ENCODE measurements at regions of chrX and their contacts with region 1.

Region 1: DNA sequence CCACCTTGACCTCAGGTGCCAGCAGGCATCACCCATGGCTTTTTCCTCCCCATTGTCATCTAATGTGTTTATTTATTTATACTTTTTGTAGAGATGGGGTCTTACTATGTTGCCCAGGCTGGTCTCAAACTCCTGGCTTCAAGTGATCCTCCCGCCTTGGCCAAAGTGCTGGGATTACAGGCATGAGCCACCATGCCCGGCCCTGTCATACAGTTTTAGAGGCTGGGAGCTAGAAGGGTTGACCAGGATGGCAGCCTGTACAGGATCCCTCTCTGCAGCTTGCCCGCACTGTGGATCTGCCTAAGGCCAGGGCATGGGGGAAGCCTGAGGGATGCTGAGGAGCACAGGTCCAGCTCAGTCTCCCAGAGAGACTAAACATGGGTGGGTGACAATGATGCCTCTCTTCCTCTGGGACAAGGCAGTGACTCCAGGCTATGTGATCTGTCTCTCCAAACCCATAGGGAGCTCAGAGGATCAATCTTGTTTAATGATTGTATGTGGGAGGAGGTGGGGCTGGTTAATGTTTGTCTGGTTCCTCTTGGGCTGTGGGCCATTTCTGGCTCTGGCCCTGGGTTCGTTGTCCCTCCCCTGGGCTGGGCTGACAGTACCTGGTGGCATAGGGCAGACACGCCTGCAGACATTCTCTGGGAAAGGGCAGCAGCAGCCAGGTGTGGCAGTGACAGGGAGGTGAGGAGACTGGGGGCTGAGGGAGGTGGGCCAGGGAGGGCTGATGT is 8.3 kb upstream of the GJB1 start:
- DNase-seq: no peak
- H3K4me3 ChIP-seq: no peak overlapping the region
- H3K27ac ChIP-seq: no peak overlapping the region
- H3K4me1 ChIP-seq: no peaks in the 10 kb centered on the region
- H3K27me3 ChIP-seq: peaks cover 0 to 48% of the 10 kb centered on the region in 2 donors
- CTCF ChIP-seq: no peak
- POLR2A ChIP-seq: no peak

Region 2: GRCh38 chrX:70398899-70399298 is 815.9 kb before region 1 on chrX:
- intact Hi-C with region 1: no loop called
- DNase-seq: no peak
- H3K4me3 ChIP-seq: no peak overlapping the region
- H3K27ac ChIP-seq: no peak overlapping the region
- H3K4me1 ChIP-seq: no peaks in the 10 kb centered on the region
- H3K27me3 ChIP-seq: peaks cover 0 to 19% of the 10 kb centered on the region in 2 donors
- CTCF ChIP-seq: no peak
- POLR2A ChIP-seq: no peak

Region 3: GRCh38 chrX:71164071-71164470 is 50.7 kb before region 1 on chrX:
- intact Hi-C with region 1: loop called (anchors 2 kb)
- DNase-seq: no peak
- H3K4me3 ChIP-seq: no peak overlapping the region
- H3K27ac ChIP-seq: no peak overlapping the region
- H3K4me1 ChIP-seq: no peaks in the 10 kb centered on the region
- H3K27me3 ChIP-seq: peaks cover 0 to 56% of the 10 kb centered on the region in 2 donors
- CTCF ChIP-seq: no peak
- POLR2A ChIP-seq: no peak

Region 4: DNA sequence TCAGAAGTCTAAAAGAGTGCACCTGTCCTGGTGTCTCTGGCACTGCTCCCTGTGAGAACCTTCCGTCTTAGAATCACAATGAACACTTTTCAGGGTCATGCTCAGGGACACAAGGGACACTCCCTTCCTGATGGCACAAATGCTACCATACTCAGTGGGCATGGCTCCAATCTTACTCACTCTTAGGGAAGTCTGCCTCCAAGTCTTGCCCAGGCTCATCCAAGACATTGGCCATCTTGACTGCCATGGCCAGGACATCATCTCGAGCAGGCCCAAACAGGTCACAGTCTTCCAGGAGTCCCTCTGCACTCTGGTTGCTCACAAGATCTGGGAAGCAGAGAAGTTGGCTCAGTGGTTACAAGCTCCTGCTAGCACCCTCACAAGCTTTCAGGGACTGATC is 30.4 kb after region 1 on chrX:
- intact Hi-C with region 1: loop called (anchors 1 kb)
- DNase-seq: no peak
- H3K4me3 ChIP-seq: no peak overlapping the region
- H3K27ac ChIP-seq: no peak overlapping the region
- H3K4me1 ChIP-seq: no peaks in the 10 kb centered on the region
- H3K27me3 ChIP-seq: peaks cover 0 to 37% of the 10 kb centered on the region in 2 donors
- CTCF ChIP-seq: no peak
- POLR2A ChIP-seq: no peak

Measured in breast epithelium (tissue), 4 donors.